ENCODE measurements at regions of chr19 and their contacts with region 1.

Region 1: GRCh38 chr19:39846176-39846677 is at the start of gene FBL:
- DNase-seq: peak; percentile 35
- H3K4me3 ChIP-seq: peak within 1 kb of the TSS; percentile 67
- H3K27me3 ChIP-seq: no peaks in the 10 kb centered on the region
- CTCF ChIP-seq: no peak
- polyA plus RNA-seq, gene FBL: 228 and 372 TPM in 2 replicates

Region 2: GRCh38 chr19:39778763-39779162 is 67.5 kb before region 1 on chr19 and contains the start of gene LEUTX:
- CTCF ChIA-PET with region 1: interaction called, 13 read pairs
- POLR2A ChIA-PET with region 1: no interaction called
- DNase-seq: no peak
- H3K4me3 ChIP-seq: no peak within 1 kb of the TSS
- H3K27me3 ChIP-seq: no peaks in the 10 kb centered on the region
- CTCF ChIP-seq: no peak
- polyA plus RNA-seq, gene LEUTX: not detected in 2 replicates

Region 3: GRCh38 chr19:39824143-39825092 is 21.8 kb before region 1 on chr19:
- CTCF ChIA-PET with region 1: interaction called, 46 read pairs
- POLR2A ChIA-PET with region 1: no interaction called
- DNase-seq: peak; percentile 80
- H3K4me3 ChIP-seq: peak overlapping the region; percentile 96
- H3K27me3 ChIP-seq: no peaks in the 10 kb centered on the region
- CTCF ChIP-seq: no peak

Region 4: DNA sequence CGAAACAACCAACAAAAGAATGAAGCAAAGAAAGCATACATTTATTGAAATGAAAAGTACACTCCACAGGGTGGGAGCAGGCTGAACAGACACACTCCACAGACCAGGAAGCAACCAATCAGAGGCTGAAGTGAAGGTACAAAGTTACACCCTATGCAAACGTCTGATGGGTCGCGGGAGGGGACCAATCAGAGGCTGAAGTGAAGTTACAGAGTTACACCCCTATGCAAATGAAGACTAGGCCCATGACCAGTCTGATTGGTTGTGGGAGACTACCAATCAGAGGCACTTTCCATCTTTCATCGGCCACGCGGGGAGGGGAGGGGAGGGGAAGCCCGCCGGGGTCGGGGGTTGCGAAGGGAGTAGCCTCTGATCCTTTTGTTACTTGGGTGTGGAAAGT is 12.3 kb after region 1 on chr19:
- CTCF ChIA-PET with region 1: interaction called, 14 read pairs
- POLR2A ChIA-PET with region 1: no interaction called
- DNase-seq: no peak
- H3K4me3 ChIP-seq: no peak overlapping the region
- H3K27me3 ChIP-seq: no peaks in the 10 kb centered on the region
- CTCF ChIP-seq: no peak

Measured in BJ (cell line).